GM12878 (cell line): ENCODE measurements at regions of chr6 and their contacts with region 1.

Region 1: GRCh38 chr6:91730710-91731109 is 1143.8 kb upstream of the MAP3K7 start:
- DNase-seq: no peak
- ATAC-seq: peak; percentile 96
- H3K4me3 ChIP-seq: no peak overlapping the region
- H3K27ac ChIP-seq: no peak overlapping the region
- H3K4me1 ChIP-seq: no peaks in the 10 kb centered on the region
- H3K27me3 ChIP-seq: no peaks in the 10 kb centered on the region
- CTCF ChIP-seq: no peak
- EP300 ChIP-seq: peak in 1 of 2 experiments; percentile 32; a peak in 1 of 4 replicates
- POLR2A ChIP-seq: no peak
- RAD21 ChIP-seq: no peak

Region 2: DNA sequence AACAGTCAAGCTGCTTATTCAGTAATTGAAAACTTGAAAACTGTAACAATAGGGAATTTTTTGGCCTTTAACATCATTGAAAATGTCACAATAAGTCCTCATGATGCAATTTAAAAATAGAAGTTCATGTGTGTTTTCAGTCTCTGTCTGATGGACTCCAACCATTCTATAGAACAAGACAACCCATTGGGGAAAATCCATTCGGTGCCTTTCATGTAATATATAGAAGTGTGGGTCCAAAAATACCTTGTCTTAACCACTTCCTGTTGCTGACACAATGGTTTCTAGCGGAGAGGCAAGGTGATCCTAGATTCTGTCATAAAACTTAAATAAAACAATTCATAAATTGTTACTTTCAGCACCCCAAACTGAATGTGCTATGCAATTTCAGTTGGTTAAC is 12.5 kb before region 1 on chr6:
- CTCF ChIA-PET with region 1: interaction called, 5 read pairs
- POLR2A ChIA-PET with region 1: interaction called, 4 read pairs
- RAD21 ChIA-PET with region 1: interaction called, 7 read pairs
- SMC1A ChIA-PET with region 1: interaction called, 25 read pairs
- in situ Hi-C with region 1: no loop called
- intact Hi-C with region 1: no loop called
- DNase-seq: no peak
- ATAC-seq: peak; percentile 83
- H3K4me3 ChIP-seq: no peak overlapping the region
- H3K27ac ChIP-seq: no peak overlapping the region
- H3K4me1 ChIP-seq: no peaks in the 10 kb centered on the region
- H3K27me3 ChIP-seq: no peaks in the 10 kb centered on the region
- CTCF ChIP-seq: no peak
- EP300 ChIP-seq: peak; percentile 51 to 52; a peak in 2 of 4 replicates
- POLR2A ChIP-seq: no peak
- RAD21 ChIP-seq: no peak

Region 3: DNA sequence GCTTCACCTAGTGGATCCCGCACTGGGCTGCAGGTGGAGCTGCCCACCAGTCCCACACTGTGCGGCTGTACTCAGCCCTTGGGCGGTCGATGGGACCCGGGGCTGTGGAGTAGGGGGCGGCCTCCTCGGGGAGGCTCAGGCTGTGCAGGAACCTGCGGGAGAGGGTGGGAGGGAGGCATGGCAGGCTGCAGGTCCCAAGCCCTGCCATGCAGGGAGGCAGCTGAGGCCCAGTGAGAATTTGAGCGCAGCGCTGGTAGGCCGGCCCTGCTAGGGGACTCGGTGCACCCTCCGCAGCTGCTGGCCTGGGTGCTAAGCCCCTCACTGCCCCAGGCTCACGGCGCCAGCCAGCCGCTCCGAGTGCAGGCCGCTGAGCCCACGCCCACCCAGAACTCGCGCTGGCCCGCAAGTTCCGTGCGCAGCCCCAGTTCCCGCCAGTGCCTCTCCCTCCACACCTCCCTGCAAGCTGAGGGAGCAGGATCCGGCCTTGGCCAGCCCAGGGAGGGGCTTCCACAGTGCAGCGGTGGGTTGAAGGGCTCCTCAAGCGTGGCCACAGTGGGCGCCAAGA is 281.1 kb after region 1 on chr6:
- CTCF ChIA-PET with region 1: no interaction called
- POLR2A ChIA-PET with region 1: no interaction called
- RAD21 ChIA-PET with region 1: no interaction called
- SMC1A ChIA-PET with region 1: no interaction called
- in situ Hi-C with region 1: no loop called
- intact Hi-C with region 1: no loop called
- DNase-seq: no peak
- ATAC-seq: no peak
- H3K4me3 ChIP-seq: no peak overlapping the region
- H3K27ac ChIP-seq: no peak overlapping the region
- H3K4me1 ChIP-seq: no peaks in the 10 kb centered on the region
- H3K27me3 ChIP-seq: no peaks in the 10 kb centered on the region
- CTCF ChIP-seq: no peak
- EP300 ChIP-seq: no peak
- POLR2A ChIP-seq: no peak
- RAD21 ChIP-seq: no peak